Posterior cingulate gyrus (tissue), 11 donors: ENCODE measurements at regions of chr15 and their contacts with region 1.

Region 1: GRCh38 chr15:98292442-98293240 is 332.1 kb downstream of the ARRDC4 start:
- DNase-seq: peak in 9 of 10 donors; percentile 35 to 91 (median 58)

Region 2: DNA sequence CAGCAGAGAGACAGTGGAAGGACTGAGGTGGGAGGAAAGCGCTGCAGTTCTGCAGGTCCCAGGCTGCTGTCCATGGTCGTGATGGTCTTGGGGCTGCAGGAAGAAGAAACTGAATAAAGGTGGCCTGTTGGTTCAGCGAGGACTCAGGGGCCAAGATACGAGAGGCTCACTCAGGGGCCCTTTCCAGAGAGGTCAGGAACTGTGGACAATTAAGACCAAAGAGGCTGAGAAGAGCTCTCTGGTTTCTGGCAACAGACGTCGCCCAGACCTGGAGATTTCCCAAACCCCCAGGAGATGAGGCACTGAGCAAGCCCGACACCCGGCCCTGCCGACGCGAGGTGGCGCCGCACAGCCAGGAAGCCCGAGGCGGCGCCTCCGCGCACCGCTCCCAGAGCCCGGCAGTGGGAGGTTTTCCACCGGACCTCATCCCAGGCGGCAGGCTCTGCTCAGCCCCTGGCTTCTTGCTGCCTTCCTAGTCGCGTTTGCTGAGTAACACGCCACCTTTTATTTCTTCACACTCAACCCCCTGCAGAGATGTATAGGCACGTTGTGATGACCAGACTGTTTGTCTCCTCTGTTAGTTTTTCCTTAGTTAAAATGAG is 388.6 kb before region 1 on chr15:
- intact Hi-C with region 1: loop called (anchors 5 kb)
- DNase-seq: peak; percentile 46 to 95 (median 72)

Region 3: GRCh38 chr15:98123834-98124474 is 168.7 kb before region 1 on chr15:
- intact Hi-C with region 1: no loop called
- DNase-seq: no peak